CD4-positive, alpha-beta T cell (primary cell): ENCODE measurements at regions of chr2 and their contacts with region 1.

Region 1: DNA sequence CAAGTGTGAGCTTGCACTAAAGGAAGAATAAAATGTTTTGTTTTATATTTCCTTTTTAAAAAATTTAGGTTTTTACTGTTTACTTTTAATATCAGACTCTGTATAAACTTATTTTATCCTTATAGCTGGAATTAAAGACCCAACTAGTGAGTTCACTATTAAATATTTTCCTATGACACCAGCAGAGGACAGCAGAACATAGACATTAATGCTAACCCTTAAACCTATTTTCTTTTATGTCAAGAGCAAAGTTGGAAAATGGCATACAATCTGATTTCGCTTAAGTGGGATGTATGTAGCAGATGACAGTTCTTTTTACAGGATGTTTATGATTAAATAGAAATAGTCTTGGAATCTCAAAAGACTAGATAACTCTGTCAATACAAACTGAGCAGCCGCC is 188.2 kb upstream of the XIRP2 start:
- DNase-seq: peak in 2 of 14 experiments; percentile 10 to 11
- ATAC-seq: no peak
- H3K4me3 ChIP-seq: no peak overlapping the region
- H3K4me3 Mint-ChIP-seq: no peak overlapping the region
- H3K27ac ChIP-seq: no peak overlapping the region
- H3K27ac Mint-ChIP-seq: no peak overlapping the region
- H3K4me1 ChIP-seq: no peaks in the 10 kb centered on the region
- H3K4me1 Mint-ChIP-seq: no peaks in the 10 kb centered on the region
- H3K27me3 ChIP-seq: no peaks in the 10 kb centered on the region
- H3K27me3 Mint-ChIP-seq: peaks cover 9% of the 10 kb centered on the region
- CTCF ChIP-seq: no peak

Region 2: GRCh38 chr2:167212014-167212648 is 512.1 kb after region 1 on chr2:
- CTCF ChIA-PET with region 1: no interaction called
- POLR2A ChIA-PET with region 1: no interaction called
- intact Hi-C with region 1: loop called in 1 of 2 experiments (anchors 5 kb)
- DNase-seq: peak in 4 of 14 experiments; percentile 17 to 32 (median 24)
- ATAC-seq: no peak
- H3K4me3 ChIP-seq: no peak overlapping the region
- H3K4me3 Mint-ChIP-seq: no peak overlapping the region
- H3K27ac ChIP-seq: no peak overlapping the region
- H3K27ac Mint-ChIP-seq: no peak overlapping the region
- H3K4me1 ChIP-seq: no peaks in the 10 kb centered on the region
- H3K4me1 Mint-ChIP-seq: no peaks in the 10 kb centered on the region
- H3K27me3 ChIP-seq: no peaks in the 10 kb centered on the region
- H3K27me3 Mint-ChIP-seq: peaks cover 4% of the 10 kb centered on the region
- CTCF ChIP-seq: peak; percentile 32

Region 3: DNA sequence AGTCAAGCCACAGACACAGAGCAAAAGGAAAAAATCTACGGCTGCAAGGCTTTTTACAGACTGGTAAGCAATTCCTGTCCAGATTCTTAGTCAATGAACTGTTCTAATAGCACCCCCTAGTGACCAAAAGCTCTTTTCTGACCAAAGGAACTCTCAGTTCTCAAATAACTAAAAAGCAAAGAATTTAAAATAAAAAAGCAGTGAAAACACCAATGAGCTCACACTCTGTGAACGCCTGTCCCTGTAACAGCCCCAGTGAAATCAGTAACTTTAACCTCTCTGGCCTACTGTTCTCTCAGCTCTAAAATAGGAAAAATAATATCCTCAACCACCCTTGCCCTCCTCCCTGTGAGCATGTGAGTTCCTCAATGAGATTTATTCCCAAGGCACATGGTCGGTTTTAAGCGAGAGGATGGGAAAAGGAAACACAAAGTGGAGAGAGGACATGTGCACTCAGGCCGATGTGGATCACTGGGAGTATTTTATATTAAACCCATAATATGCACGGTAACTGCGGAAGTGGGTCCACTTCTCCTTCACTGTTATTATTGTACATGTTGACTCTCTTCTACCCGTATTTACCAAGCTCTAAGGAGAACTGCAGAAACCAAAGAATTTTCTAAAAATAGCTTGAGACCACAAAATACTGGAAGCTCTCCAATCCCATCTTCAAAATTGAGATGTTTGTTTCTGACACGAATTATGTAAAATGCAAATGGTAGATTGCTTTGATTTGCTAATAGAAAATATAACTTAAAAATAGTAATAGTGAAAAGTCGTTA is 1418.8 kb after region 1 on chr2:
- CTCF ChIA-PET with region 1: no interaction called
- POLR2A ChIA-PET with region 1: no interaction called
- intact Hi-C with region 1: loop called in 1 of 2 experiments (anchors 2 kb)
- DNase-seq: peak in 3 of 14 experiments; percentile 56 to 60 (median 56)
- ATAC-seq: no peak
- H3K4me3 ChIP-seq: no peak overlapping the region
- H3K4me3 Mint-ChIP-seq: no peak overlapping the region
- H3K27ac ChIP-seq: no peak overlapping the region
- H3K27ac Mint-ChIP-seq: no peak overlapping the region
- H3K4me1 ChIP-seq: no peaks in the 10 kb centered on the region
- H3K4me1 Mint-ChIP-seq: no peaks in the 10 kb centered on the region
- H3K27me3 ChIP-seq: no peaks in the 10 kb centered on the region
- H3K27me3 Mint-ChIP-seq: no peaks in the 10 kb centered on the region
- CTCF ChIP-seq: peak; percentile 51